ENCODE measurements at regions of chr6 and their contacts with region 1.

Region 1: GRCh38 chr6:29752451-29753308 is 29.4 kb downstream of the HLA-F start:
- DNase-seq: peak; percentile 72 to 88 (median 80)
- ATAC-seq: peak; percentile 66 to 77
- H3K4me3 Mint-ChIP-seq: peak overlapping the region; percentile 85 to 99 (median 96)
- H3K27ac Mint-ChIP-seq: peak overlapping the region; percentile 86 to 98 (median 91)
- H3K4me1 Mint-ChIP-seq: peaks cover 29 to 63% (median 46%) of the 10 kb centered on the region in 4 donors
- H3K27me3 Mint-ChIP-seq: peaks cover 0 to 9% (median 0%) of the 10 kb centered on the region in 5 donors

Region 2: DNA sequence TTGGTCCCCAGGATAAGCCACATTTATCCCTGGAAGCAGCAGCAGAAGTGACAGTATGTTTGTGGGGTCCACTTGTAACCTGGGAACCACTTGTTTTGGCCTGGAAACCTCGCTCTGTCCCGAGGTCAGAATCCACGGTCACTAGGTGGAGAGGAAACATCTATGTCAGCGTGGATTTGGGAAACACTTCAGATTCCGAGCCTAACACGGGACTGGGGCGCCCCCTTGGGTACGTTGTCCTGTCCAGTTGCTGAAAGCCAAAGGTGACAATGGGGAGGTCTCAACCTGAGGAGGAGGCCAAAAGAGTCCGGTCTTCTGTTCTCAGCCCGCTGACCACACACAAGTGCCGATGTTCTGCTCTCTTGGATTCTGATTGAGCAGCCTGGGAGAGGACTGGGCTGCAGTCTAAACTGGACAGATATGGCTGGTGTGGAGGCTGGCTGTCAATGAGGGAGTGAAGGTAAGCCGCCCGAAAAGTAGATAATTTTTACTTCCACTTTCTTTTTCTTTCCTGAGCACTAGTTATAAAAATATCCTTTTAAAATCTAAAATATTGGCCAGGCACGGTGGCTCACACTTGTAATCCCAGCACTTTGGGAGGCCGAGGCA is 66.9 kb before region 1 on chr6:
- POLR2A ChIA-PET with region 1: no interaction called
- DNase-seq: no peak
- ATAC-seq: no peak
- H3K4me3 Mint-ChIP-seq: no peak overlapping the region
- H3K27ac Mint-ChIP-seq: no peak overlapping the region
- H3K4me1 Mint-ChIP-seq: peaks cover 0 to 3% (median 0%) of the 10 kb centered on the region in 4 donors
- H3K27me3 Mint-ChIP-seq: peaks cover 0 to 9% (median 0%) of the 10 kb centered on the region in 5 donors

Region 3: DNA sequence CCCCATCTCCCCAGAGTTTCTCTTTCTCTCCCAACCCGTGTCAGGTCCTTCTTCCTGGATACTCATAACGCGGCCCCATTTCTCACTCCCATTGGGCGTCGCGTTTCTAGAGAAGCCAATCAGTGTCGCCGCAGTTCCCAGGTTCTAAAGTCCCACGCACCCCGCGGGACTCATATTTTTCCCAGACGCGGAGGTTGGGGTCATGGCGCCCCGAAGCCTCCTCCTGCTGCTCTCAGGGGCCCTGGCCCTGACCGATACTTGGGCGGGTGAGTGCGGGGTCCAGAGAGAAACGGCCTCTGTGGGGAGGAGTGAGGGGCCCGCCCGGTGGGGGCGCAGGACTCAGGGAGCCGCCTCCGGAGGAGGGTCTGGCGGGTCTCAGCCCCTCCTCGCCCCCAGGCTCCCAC is 29.4 kb before region 1 on chr6 and contains the start of gene HLA-F:
- POLR2A ChIA-PET with region 1: interaction called, 20 read pairs
- DNase-seq: peak; percentile 65 to 94 (median 86)
- ATAC-seq: peak; percentile 83 to 84
- H3K4me3 Mint-ChIP-seq: peak within 1 kb of the TSS; percentile 92 to 98 (median 98)
- H3K27ac Mint-ChIP-seq: peak within 1 kb of the TSS; percentile 91 to 100 (median 98)
- H3K4me1 Mint-ChIP-seq: peaks cover 33 to 56% (median 53%) of the 10 kb centered on the region in 4 donors
- H3K27me3 Mint-ChIP-seq: no peaks in the 10 kb centered on the region
- polyA plus RNA-seq, gene HLA-F: 457 to 626 (median 619) TPM

Region 4: GRCh38 chr6:29728173-29728874 is 24.4 kb before region 1 on chr6:
- POLR2A ChIA-PET with region 1: interaction called, 26 read pairs
- DNase-seq: no peak
- ATAC-seq: no peak
- H3K4me3 Mint-ChIP-seq: peak overlapping the region in 9 of 10 donors; percentile 20 to 98 (median 69)
- H3K27ac Mint-ChIP-seq: peak overlapping the region; percentile 61 to 99 (median 77)
- H3K4me1 Mint-ChIP-seq: peaks cover 38 to 82% (median 69%) of the 10 kb centered on the region in 4 donors
- H3K27me3 Mint-ChIP-seq: no peaks in the 10 kb centered on the region

Region 5: DNA sequence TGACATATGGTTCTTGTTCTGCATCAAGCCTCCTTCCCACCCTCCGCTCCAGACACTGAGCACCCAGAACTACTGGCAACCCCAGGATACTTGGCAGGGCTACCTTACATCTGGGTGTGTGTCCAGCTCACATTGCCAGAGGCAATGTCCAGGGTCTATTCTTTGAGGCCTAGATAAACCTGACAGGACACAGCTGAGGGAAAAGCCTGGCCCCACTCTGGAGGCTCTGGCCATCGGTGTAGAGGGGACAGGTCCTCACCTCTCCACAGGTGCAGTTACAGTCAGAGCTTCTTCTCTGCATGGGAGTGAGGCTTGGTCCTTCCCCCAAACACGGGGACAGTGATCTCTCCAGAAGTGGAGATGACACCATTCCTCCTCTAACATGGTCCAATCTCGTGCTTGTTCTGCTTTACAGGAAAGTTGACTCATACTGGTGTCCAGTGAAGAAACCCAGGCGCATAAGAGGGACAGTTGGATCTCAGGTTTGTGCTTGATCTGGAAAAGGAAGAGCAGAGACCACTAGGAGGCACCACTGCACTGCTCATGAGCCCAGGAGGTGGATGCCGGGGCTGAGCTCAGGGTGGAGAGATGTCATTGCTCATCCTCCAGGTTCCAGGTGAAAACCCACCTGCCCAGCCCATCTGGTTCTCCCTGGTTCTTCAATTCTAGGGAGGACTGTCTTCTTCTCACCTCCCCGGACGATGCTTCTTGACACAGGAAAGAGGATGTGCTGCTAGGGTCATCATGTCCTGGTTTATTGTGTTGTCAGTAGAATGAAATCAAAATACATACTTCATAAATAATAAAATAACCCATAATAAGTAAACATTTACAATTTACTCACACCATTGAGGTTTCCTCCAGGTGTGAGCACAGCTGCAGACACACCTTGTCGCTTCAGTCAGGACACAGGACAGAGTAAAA is 14.7 kb before region 1 on chr6:
- POLR2A ChIA-PET with region 1: interaction called, 26 read pairs
- DNase-seq: peak; percentile 48 to 87 (median 68)
- ATAC-seq: peak; percentile 92 to 95
- H3K4me3 Mint-ChIP-seq: no peak overlapping the region
- H3K27ac Mint-ChIP-seq: peak overlapping the region in 1 of 10 donors; percentile 25
- H3K4me1 Mint-ChIP-seq: peaks cover 3 to 25% (median 18%) of the 10 kb centered on the region in 4 donors
- H3K27me3 Mint-ChIP-seq: no peaks in the 10 kb centered on the region

Region 6: GRCh38 chr6:29763491-29764289 is 11.0 kb after region 1 on chr6:
- POLR2A ChIA-PET with region 1: no interaction called
- DNase-seq: no peak
- ATAC-seq: no peak
- H3K4me3 Mint-ChIP-seq: no peak overlapping the region
- H3K27ac Mint-ChIP-seq: peak overlapping the region in 2 of 10 donors; percentile 37 to 38
- H3K4me1 Mint-ChIP-seq: peaks cover 0 to 10% (median 7%) of the 10 kb centered on the region in 4 donors
- H3K27me3 Mint-ChIP-seq: peaks cover 4 to 39% (median 15%) of the 10 kb centered on the region in 5 donors

Region 7: DNA sequence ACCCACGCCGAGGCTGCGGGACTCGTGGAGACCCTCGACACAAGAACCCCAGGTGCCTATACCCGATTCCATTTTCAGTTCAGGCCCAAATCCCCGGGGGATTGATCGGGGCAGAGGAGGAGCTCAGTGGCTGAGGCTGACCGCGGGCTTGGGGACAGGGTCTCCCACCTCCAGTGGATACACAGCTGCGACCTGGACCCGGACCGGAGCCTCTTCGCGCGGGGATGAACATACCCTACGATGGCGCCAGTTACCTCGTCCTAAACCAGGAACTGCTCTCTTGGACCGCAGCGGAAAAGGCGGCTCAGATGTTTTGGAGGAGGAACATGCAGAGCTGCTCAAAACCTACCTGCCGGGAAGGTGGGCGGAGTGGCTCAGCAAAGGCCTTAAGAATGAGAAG is 47.6 kb after region 1 on chr6:
- POLR2A ChIA-PET with region 1: no interaction called
- DNase-seq: no peak
- ATAC-seq: no peak
- H3K4me3 Mint-ChIP-seq: no peak overlapping the region
- H3K27ac Mint-ChIP-seq: no peak overlapping the region
- H3K4me1 Mint-ChIP-seq: no peaks in the 10 kb centered on the region
- H3K27me3 Mint-ChIP-seq: peaks cover 5 to 30% (median 14%) of the 10 kb centered on the region in 5 donors

Region 8: GRCh38 chr6:29870104-29870503 is 117.4 kb after region 1 on chr6:
- POLR2A ChIA-PET with region 1: no interaction called
- DNase-seq: no peak
- ATAC-seq: no peak
- H3K4me3 Mint-ChIP-seq: no peak overlapping the region
- H3K27ac Mint-ChIP-seq: no peak overlapping the region
- H3K4me1 Mint-ChIP-seq: peaks cover 0 to 2% (median 0%) of the 10 kb centered on the region in 4 donors
- H3K27me3 Mint-ChIP-seq: peaks cover 10 to 34% (median 22%) of the 10 kb centered on the region in 5 donors

Measured in naive thymus-derived CD8-positive, alpha-beta T cell (primary cell).